ENCODE measurements at regions of chr17 and their contacts with region 1.

Region 1: DNA sequence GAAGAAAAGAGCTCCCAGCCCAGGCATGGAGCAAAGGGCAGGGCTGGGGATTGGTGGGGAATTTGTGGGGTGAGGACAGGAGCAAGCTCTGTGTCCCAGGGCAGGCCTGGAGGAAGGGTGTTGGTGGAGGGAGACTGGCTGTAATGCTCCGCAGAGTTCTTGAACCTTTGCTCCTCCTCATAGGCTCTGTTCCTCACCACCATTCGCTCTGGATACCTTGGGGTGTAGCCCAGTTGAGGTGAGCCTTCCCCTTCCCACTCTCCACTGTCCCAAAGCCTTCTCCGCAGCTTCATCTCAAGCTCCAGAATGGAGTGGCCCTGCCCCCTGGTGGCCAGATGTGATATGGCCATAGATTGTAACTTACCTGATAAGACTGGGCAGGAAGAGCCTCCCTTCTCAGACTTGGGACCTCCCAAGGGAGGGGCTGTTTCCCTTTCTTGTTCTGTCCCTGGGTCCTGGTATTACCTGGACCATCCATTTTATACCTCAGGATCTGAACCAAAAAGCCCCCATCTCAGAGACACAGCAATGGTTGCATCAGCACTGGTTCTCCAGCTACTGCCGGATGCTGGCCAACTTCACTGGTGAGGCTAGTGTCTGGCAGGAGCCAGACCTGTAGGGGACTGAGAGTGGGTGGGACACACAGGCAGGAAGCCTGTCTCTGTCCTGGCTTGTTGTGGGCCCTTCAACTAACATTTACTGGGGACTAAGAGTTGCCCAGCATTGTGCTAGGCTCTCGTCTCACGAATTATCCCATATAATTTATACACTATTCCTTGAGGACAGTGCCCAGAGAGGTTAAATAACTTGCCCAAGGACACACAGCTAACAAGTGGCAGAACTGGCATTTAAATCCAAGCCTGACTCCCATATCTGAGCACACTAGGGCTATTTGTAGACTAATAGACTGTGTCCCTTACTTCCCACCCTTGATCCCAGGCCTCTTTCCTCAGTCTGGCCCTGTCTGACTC is 19.1 kb upstream of the STAC2 start:
- DNase-seq: peak; percentile 71 to 94 (median 87)
- ATAC-seq: peak; percentile 94
- H3K4me3 ChIP-seq: no peak overlapping the region
- H3K4me3 Mint-ChIP-seq: no peak overlapping the region
- H3K27ac ChIP-seq: no peak overlapping the region
- H3K27ac Mint-ChIP-seq: no peak overlapping the region
- H3K4me1 ChIP-seq: peaks cover 15% of the 10 kb centered on the region
- H3K4me1 Mint-ChIP-seq: peaks cover 14% of the 10 kb centered on the region
- H3K27me3 ChIP-seq: no peaks in the 10 kb centered on the region
- H3K27me3 Mint-ChIP-seq: peaks cover 2% of the 10 kb centered on the region
- CTCF ChIP-seq: peak; percentile 90

Region 2: DNA sequence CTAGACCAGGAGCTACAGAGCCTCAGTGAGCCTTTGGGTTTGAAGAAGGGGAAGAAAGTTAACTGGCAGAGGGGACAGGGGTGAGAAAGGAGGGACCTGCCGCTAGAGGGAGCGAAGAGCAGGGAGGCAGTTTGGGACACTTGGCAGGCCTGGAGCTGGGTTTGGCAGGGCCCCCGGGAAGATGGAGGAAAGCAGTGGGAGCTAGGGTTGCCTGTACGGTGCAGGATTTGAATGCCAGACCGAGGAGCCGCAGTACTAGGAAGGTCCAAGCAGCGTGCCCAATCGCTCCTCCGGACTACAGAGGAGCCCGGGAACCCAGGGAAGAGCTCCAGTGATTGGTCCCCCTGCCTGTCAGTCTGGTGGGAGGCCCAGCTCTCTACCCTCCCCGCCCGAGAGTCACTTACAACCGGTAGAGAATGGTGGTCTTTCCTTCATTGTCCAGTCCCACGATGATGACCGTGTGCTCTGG is 80.2 kb before region 1 on chr17:
- CTCF ChIA-PET with region 1: interaction called, 25 read pairs
- POLR2A ChIA-PET with region 1: no interaction called
- intact Hi-C with region 1: loop called in 1 of 2 experiments (anchors 1 kb)
- DNase-seq: peak; percentile 53 to 90 (median 74)
- ATAC-seq: peak; percentile 89
- H3K4me3 ChIP-seq: peak overlapping the region; percentile 68 to 95
- H3K4me3 Mint-ChIP-seq: peak overlapping the region; percentile 91
- H3K27ac ChIP-seq: peak overlapping the region in 1 of 2 experiments; percentile 21
- H3K27ac Mint-ChIP-seq: peak overlapping the region; percentile 67
- H3K4me1 ChIP-seq: peaks cover 20% of the 10 kb centered on the region
- H3K4me1 Mint-ChIP-seq: peaks cover 33% of the 10 kb centered on the region
- H3K27me3 ChIP-seq: peaks cover 0 to 3% of the 10 kb centered on the region in 2 experiments
- H3K27me3 Mint-ChIP-seq: peaks cover 11% of the 10 kb centered on the region
- CTCF ChIP-seq: peak; percentile 80

Region 3: GRCh38 chr17:39209317-39210092 is 35.4 kb before region 1 on chr17:
- CTCF ChIA-PET with region 1: interaction called, 429 read pairs
- POLR2A ChIA-PET with region 1: interaction called, 39 read pairs
- intact Hi-C with region 1: loop called (anchors 1 kb)
- DNase-seq: peak; percentile 35 to 86 (median 79)
- ATAC-seq: peak; percentile 84
- H3K4me3 ChIP-seq: peak overlapping the region; percentile 34 to 49
- H3K4me3 Mint-ChIP-seq: peak overlapping the region; percentile 66
- H3K27ac ChIP-seq: peak overlapping the region; percentile 19 to 60
- H3K27ac Mint-ChIP-seq: peak overlapping the region; percentile 73
- H3K4me1 ChIP-seq: peaks cover 35% of the 10 kb centered on the region
- H3K4me1 Mint-ChIP-seq: peaks cover 31% of the 10 kb centered on the region
- H3K27me3 ChIP-seq: peaks cover 0 to 5% of the 10 kb centered on the region in 2 experiments
- H3K27me3 Mint-ChIP-seq: no peaks in the 10 kb centered on the region
- CTCF ChIP-seq: no peak

Region 4: DNA sequence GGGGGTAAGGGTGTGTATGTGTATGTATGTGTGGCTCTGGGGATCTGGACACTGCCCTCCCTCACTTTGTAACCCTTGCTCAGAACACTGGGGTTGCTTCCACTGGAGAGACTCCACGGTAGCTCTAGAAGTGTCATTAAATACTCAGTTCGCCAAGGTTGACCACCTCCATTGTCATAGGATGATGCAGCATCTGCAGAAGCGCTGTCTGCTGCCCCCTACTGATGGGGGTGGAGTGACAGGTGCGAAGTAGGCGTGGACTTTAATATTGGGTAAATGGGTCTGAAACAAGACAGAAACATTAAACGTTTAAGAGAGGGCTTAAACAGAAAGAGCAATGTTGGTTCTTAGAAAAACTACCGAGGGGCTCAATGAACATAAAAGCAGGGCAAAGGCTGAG is 16.4 kb after region 1 on chr17:
- CTCF ChIA-PET with region 1: interaction called, 17 read pairs
- POLR2A ChIA-PET with region 1: no interaction called
- intact Hi-C with region 1: no loop called
- DNase-seq: peak in 3 of 9 experiments; percentile 20 to 35 (median 34)
- ATAC-seq: no peak
- H3K4me3 ChIP-seq: no peak overlapping the region
- H3K4me3 Mint-ChIP-seq: no peak overlapping the region
- H3K27ac ChIP-seq: no peak overlapping the region
- H3K27ac Mint-ChIP-seq: no peak overlapping the region
- H3K4me1 ChIP-seq: no peaks in the 10 kb centered on the region
- H3K4me1 Mint-ChIP-seq: no peaks in the 10 kb centered on the region
- H3K27me3 ChIP-seq: no peaks in the 10 kb centered on the region
- H3K27me3 Mint-ChIP-seq: no peaks in the 10 kb centered on the region
- CTCF ChIP-seq: peak; percentile 27

Measured in CD8-positive, alpha-beta T cell (primary cell).